ENCODE measurements at regions of chr6 and their contacts with region 1.

Region 1: DNA sequence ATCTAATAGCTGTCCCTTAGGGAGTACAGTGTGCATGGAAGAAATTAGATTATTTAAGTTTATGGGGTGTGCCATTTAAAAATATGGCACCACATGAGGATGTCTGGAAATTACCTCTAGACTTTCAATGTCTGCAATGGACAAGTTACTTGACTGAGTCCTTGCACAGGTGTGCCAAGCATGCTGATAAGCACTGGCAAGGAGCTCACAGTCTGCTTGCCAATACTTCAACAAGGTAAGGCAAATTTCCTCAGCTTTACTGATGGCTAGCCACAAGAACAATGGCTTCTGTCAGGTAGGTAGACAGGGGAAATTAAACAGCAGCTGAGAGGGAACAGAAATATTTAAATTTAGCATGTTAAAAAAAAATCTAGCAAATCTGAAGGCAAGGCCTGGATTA is 91.1 kb upstream of the TRAF3IP2 start:
- DNase-seq: no peak
- H3K4me3 ChIP-seq: no peak overlapping the region
- H3K4me3 Mint-ChIP-seq: no peak overlapping the region
- H3K27ac ChIP-seq: no peak overlapping the region
- H3K27ac Mint-ChIP-seq: peak overlapping the region in 3 of 7 donors; percentile 48 to 64 (median 63)
- H3K4me1 ChIP-seq: peaks cover 54% of the 10 kb centered on the region
- H3K4me1 Mint-ChIP-seq: peaks cover 46 to 76% (median 63%) of the 10 kb centered on the region in 4 donors
- H3K27me3 ChIP-seq: no peaks in the 10 kb centered on the region
- H3K27me3 Mint-ChIP-seq: no peaks in the 10 kb centered on the region

Region 2: DNA sequence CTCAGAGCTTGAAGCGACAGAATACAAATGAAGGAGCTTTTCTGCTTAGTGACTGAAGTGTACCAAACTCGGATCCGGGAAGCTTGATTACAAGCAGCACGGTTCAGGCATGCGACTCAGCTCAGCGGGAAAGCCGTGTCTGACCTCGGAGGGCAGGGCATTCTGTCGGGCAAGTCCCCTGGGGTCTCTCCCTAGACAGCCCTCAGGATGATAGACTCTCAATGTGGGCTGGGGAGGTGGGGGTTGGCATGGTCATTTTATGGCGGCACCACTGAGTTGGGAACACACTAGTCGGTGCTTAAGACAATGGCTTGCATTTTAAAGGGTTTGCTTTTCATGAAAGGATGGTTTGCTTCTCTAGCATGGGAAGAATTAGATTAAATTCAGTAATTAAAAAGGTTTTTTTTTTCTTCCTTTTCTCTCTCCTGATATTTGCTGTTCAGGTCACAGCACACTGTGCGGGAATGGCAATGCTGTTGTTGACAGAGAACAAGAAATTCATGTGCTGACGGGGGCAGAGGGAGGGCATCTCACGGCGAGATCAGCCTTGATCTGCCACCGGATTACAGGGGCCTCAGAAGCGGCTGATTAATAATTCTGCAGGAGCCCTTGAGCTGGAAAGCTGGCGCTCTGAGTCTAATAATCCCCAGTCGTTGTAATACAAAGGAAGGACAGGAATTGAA is 10.4 kb before region 1 on chr6:
- CTCF ChIA-PET with region 1: no interaction called
- POLR2A ChIA-PET with region 1: interaction called, 11 read pairs
- intact Hi-C with region 1: no loop called
- DNase-seq: no peak
- H3K4me3 ChIP-seq: no peak overlapping the region
- H3K4me3 Mint-ChIP-seq: peak overlapping the region in 4 of 8 donors; percentile 4 to 50 (median 33)
- H3K27ac ChIP-seq: no peak overlapping the region
- H3K27ac Mint-ChIP-seq: peak overlapping the region; percentile 48 to 86 (median 76)
- H3K4me1 ChIP-seq: peaks cover 66% of the 10 kb centered on the region
- H3K4me1 Mint-ChIP-seq: peaks cover 66 to 95% (median 79%) of the 10 kb centered on the region in 4 donors
- H3K27me3 ChIP-seq: no peaks in the 10 kb centered on the region
- H3K27me3 Mint-ChIP-seq: no peaks in the 10 kb centered on the region

Region 3: DNA sequence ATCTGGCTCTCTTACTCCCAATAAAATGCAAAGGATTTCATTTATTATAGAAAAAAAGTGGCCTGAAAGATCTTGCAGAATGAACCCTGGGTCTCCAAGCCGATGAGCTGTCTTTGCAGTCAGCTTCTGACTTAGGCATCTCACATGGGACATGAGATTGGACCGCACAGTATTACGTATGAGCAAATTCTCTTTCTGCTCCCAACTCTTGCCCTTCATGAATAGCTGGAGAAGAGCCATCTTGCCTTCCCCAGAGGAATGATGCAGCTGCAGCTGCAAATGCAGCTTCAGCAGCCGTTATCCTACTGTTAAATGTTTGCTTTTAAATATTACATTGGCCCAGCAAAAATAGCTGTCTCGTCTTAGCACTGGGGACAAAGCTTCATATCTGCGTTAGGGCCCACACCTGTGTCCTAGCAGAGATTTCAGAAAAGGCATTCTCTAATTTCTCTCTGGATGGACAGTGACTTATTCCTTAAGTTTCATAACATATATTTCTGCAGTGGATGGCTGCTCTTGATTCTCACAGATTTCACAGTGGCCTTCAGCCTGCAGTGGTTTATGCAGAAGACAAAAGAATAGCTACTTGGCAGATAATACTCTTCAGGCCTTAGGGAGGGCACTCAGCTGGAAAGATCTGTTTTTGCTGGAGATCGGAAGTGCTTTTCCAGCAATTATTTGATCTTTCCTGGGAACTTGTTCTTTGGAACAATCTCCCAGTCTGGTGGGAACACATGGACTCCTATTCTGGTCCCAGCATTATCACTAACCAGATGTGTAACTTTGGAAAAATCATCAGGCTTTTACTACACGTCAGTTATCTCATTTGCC is 47.3 kb after region 1 on chr6:
- CTCF ChIA-PET with region 1: no interaction called
- POLR2A ChIA-PET with region 1: no interaction called
- intact Hi-C with region 1: no loop called
- DNase-seq: no peak
- H3K4me3 ChIP-seq: no peak overlapping the region
- H3K4me3 Mint-ChIP-seq: peak overlapping the region in 1 of 8 donors; percentile 40
- H3K27ac ChIP-seq: no peak overlapping the region
- H3K27ac Mint-ChIP-seq: peak overlapping the region in 6 of 7 donors; percentile 28 to 86 (median 49)
- H3K4me1 ChIP-seq: peaks cover 99% of the 10 kb centered on the region
- H3K4me1 Mint-ChIP-seq: peaks cover 77 to 100% (median 90%) of the 10 kb centered on the region in 4 donors
- H3K27me3 ChIP-seq: no peaks in the 10 kb centered on the region
- H3K27me3 Mint-ChIP-seq: no peaks in the 10 kb centered on the region